Activated CD8-positive, alpha-beta T cell treated with anti-CD3 and anti-CD28 coated beads for 36 hours (primary cell): ENCODE measurements at regions of chr6 and their contacts with region 1.

Region 1: GRCh38 chr6:110873981-110874879 is at the start of gene AMD1:
- DNase-seq: peak; percentile 96
- ATAC-seq: peak; percentile 80
- H3K4me3 Mint-ChIP-seq: peak within 1 kb of the TSS; percentile 97
- H3K27ac Mint-ChIP-seq: peak within 1 kb of the TSS; percentile 98
- H3K4me1 Mint-ChIP-seq: peaks cover 23% of the 10 kb centered on the region
- H3K27me3 Mint-ChIP-seq: peaks cover 2% of the 10 kb centered on the region
- CTCF ChIP-seq: no peak
- total RNA-seq, gene AMD1: 77.4 to 85.0 TPM

Region 2: DNA sequence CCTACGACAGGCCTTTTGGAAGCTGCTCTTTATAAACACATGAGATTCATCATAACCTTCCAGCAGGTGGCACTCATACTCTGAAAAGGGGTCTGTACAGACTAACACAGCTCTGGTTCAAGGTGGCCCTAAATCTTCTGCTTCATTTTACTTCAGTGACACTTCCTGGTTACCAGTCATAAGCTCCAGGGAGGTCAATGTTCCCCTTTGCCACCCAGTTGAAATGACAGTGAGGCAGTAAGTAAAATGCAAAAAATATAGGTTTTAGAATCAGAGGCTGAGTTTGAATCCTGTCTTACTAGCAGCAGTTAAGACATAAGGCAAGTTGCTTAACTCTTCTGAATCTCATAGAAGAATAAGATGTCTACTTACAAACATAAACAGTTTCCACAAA is 191.8 kb before region 1 on chr6:
- CTCF ChIA-PET with region 1: interaction called, 76 read pairs
- POLR2A ChIA-PET with region 1: interaction called, 17 read pairs
- intact Hi-C with region 1: loop called (anchors 2 kb)
- DNase-seq: peak; percentile 79
- ATAC-seq: peak; percentile 99
- H3K4me3 Mint-ChIP-seq: no peak overlapping the region
- H3K27ac Mint-ChIP-seq: no peak overlapping the region
- H3K4me1 Mint-ChIP-seq: peaks cover 18% of the 10 kb centered on the region
- H3K27me3 Mint-ChIP-seq: no peaks in the 10 kb centered on the region
- CTCF ChIP-seq: peak; percentile 84

Region 3: DNA sequence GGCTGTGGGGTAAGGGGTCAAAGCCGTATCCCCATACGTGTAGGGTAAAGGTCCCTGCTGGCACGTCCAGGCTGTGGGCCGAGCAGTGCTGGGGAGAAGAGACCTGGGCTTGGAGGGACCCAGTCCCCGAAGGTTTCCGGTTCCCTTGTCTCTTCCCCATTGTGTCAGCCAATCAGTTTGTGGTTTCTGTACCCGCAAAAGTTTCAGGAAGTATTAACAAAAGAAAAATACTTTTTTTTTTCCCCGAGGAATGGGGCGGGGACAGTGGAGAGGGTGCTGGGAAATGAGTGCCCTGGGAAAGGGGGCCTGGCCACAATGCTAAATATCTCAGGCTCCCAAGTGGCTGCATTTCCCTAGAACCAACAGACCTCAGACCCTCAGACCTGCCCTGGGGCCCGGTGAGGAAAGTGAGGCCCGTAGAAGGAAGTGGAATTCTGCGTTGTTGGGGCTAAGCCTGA is 14.9 kb before region 1 on chr6:
- CTCF ChIA-PET with region 1: interaction called, 6 read pairs
- POLR2A ChIA-PET with region 1: interaction called, 39 read pairs
- intact Hi-C with region 1: no loop called
- DNase-seq: no peak
- ATAC-seq: no peak
- H3K4me3 Mint-ChIP-seq: no peak overlapping the region
- H3K27ac Mint-ChIP-seq: peak overlapping the region; percentile 20
- H3K4me1 Mint-ChIP-seq: peaks cover 4% of the 10 kb centered on the region
- H3K27me3 Mint-ChIP-seq: no peaks in the 10 kb centered on the region
- CTCF ChIP-seq: no peak

Region 4: DNA sequence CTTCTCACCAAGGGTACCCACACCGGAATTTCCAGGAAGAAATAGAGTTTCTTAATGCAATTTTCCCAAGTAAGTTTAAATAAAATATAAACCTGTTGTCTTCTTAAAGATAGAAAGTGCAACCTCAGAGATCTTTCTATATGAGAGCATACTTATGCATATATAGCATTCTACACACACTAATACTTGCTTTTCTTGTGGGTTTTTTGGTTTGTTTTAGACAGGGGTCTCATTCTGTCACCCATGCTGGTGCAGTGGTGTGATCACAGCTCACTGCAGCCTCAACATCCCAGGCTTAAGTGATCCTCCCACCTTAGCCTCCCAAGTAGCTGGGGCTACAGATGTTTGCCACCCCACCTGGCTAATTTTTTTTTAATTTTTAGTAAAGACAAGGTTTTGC is 16.1 kb after region 1 on chr6:
- CTCF ChIA-PET with region 1: interaction called, 7 read pairs
- POLR2A ChIA-PET with region 1: interaction called, 54 read pairs
- intact Hi-C with region 1: no loop called
- DNase-seq: no peak
- ATAC-seq: no peak
- H3K4me3 Mint-ChIP-seq: no peak overlapping the region
- H3K27ac Mint-ChIP-seq: no peak overlapping the region
- H3K4me1 Mint-ChIP-seq: peaks cover 31% of the 10 kb centered on the region
- H3K27me3 Mint-ChIP-seq: no peaks in the 10 kb centered on the region
- CTCF ChIP-seq: no peak

Region 5: GRCh38 chr6:110944681-110945151 is 70.5 kb after region 1 on chr6:
- CTCF ChIA-PET with region 1: interaction called, 10 read pairs
- POLR2A ChIA-PET with region 1: interaction called, 40 read pairs
- intact Hi-C with region 1: loop called (anchors 5 kb)
- DNase-seq: peak; percentile 67
- ATAC-seq: peak; percentile 98
- H3K4me3 Mint-ChIP-seq: no peak overlapping the region
- H3K27ac Mint-ChIP-seq: peak overlapping the region; percentile 70
- H3K4me1 Mint-ChIP-seq: peaks cover 7% of the 10 kb centered on the region
- H3K27me3 Mint-ChIP-seq: no peaks in the 10 kb centered on the region
- CTCF ChIP-seq: no peak

Region 6: DNA sequence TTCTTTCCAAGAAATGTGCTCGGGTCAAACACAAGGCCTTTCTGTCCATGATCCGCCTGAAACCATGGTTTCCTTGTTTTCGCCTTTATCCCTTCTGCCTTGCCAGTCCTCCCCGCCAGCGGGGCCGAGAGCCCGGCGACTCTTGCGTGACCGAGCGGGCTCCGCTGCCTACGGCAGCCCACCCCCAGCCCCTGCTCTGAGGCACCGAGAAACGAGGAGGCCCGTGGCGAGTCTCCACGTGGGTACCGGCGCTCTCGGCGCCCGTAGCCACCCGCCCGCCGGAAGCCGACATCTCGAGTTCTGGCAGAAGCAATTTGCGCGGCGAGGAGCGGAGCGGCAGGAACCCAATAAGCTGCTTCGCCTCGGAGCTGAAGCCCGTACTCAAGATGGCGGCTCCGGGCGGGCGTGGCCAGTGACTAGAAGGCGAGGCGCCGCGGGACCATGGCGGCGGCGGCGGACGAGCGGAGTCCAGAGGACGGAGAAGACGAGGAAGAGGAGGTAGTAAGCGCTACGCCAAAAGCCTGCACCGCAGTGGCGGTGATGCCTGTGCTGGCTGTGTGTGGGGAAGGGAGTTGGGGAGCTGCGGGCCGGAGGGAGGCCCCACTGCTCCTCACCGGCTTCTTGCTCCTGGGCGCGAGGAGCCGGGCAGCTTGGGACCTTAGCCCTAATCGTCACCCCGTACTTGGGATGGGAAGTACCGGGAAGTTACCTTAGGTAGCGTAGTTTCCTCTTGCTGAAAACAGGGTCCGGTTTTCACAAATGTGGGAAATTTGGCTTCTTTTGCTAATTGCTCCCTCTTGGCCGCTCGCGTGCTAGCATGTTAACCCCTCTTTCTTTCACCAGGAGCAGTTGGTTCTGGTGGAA is 84.3 kb after region 1 on chr6 and contains the start of gene GTF3C6:
- CTCF ChIA-PET with region 1: interaction called, 3 read pairs
- POLR2A ChIA-PET with region 1: interaction called, 46 read pairs
- intact Hi-C with region 1: no loop called
- DNase-seq: peak; percentile 97
- ATAC-seq: peak; percentile 99
- H3K4me3 Mint-ChIP-seq: peak within 1 kb of the TSS; percentile 93
- H3K27ac Mint-ChIP-seq: peak within 1 kb of the TSS; percentile 99
- H3K4me1 Mint-ChIP-seq: peaks cover 15% of the 10 kb centered on the region
- H3K27me3 Mint-ChIP-seq: no peaks in the 10 kb centered on the region
- CTCF ChIP-seq: no peak
- total RNA-seq, gene GTF3C6: 87.5 to 89.9 TPM